ENCODE measurements at regions of chr5 and their contacts with region 1.

Region 1: GRCh38 chr5:141475625-141476131 is at the start of gene PCDHGC3:
- DNase-seq: peak; percentile 93 to 96
- H3K4me3 ChIP-seq: peak within 1 kb of the TSS; percentile 69 to 74
- H3K27ac ChIP-seq: peak within 1 kb of the TSS; percentile 84 to 87
- H3K4me1 ChIP-seq: peaks cover 0 to 46% (median 37%) of the 10 kb centered on the region in 4 donors
- H3K27me3 ChIP-seq: no peaks in the 10 kb centered on the region
- CTCF ChIP-seq: peak; percentile 24 to 56

Region 2: GRCh38 chr5:141512390-141512910 is 36.8 kb after region 1 on chr5:
- intact Hi-C with region 1: loop called (anchors 5 kb)
- DNase-seq: peak; percentile 87 to 92
- H3K4me3 ChIP-seq: peak overlapping the region; percentile 66 to 71
- H3K27ac ChIP-seq: peak overlapping the region; percentile 91 to 95
- H3K4me1 ChIP-seq: peaks cover 0 to 74% (median 56%) of the 10 kb centered on the region in 4 donors
- H3K27me3 ChIP-seq: no peaks in the 10 kb centered on the region
- CTCF ChIP-seq: peak; percentile 77 to 87

Region 3: GRCh38 chr5:141524604-141525597 is 49.2 kb after region 1 on chr5:
- intact Hi-C with region 1: loop called (anchors 2 kb)
- DNase-seq: peak; percentile 85 to 93
- H3K4me3 ChIP-seq: no peak overlapping the region
- H3K27ac ChIP-seq: peak overlapping the region; percentile 59 to 61
- H3K4me1 ChIP-seq: peaks cover 0 to 56% (median 9%) of the 10 kb centered on the region in 4 donors
- H3K27me3 ChIP-seq: no peaks in the 10 kb centered on the region
- CTCF ChIP-seq: peak; percentile 99 to 100

Measured in tibial artery (tissue), 4 donors.